Heart left ventricle (tissue), 16 donors: ENCODE measurements at regions of chr6 and their contacts with region 1.

Region 1: DNA sequence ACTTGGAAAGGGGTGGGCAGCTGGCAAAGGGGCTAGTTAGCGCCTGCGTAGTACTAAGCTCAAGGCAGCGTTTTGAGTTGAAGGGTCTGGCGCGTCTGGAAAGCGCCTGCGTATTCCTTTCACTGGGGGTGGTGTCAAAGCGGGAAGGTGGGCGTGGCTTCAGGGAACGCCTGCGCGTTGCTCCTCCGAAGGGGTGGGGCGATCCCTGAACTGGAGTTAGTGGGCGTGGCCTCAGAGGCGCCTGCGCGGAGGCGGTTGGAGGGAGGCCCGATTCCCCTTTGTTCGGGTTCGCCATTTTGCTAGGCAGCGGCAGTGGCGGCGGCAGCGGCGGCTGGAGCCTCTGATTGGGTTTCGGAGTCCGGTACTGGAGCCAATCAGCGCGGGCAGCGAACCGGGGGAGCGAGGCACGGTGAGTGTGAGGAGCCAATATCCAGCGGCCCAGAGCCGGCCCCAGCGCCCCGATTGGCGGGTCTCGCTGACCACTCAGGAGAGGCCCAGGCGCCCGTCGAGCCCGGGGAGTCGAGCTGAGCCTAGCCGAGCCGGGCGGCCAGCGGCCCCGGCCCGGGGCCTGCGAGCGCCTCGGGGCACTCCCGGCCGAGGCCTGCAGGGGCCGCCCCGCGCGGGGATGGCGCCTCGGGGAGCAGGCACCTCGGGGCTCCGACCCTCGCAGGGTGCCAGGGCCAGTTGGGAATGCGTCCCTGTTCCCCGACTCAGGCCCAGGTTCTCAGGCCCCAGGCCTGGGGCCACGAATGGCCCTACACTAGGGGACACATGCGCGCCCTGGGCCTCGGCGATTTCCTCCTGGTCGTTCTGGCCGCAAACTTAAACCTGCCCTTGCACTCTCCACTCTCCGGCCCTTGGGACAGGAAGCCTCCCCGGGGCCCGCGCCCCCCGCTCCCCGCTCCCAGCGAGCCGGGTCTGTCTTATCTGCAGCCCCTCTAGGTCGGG is at the start of gene NFYA:
- DNase-seq: peak; percentile 100
- ATAC-seq: peak; percentile 81 to 87 (median 83)
- H3K4me3 ChIP-seq: peak within 1 kb of the TSS; percentile 76 to 95 (median 90)
- H3K27ac ChIP-seq: peak within 1 kb of the TSS; percentile 93 to 100 (median 99)
- H3K4me1 ChIP-seq: peaks cover 0 to 48% (median 38%) of the 10 kb centered on the region in 12 donors
- H3K27me3 ChIP-seq: no peaks in the 10 kb centered on the region
- CTCF ChIP-seq: peak in 8 of 12 donors; percentile 3 to 54 (median 38)
- POLR2A ChIP-seq: peak; percentile 95 to 96
- total RNA-seq, gene NFYA: 6.5 to 12.5 (median 9.7) TPM

Region 2: GRCh38 chr6:40900791-40901190 is 172.2 kb before region 1 on chr6:
- intact Hi-C with region 1: loop called in 2 of 10 experiments (anchors 5 kb)
- DNase-seq: peak in 4 of 5 donors; percentile 52 to 63 (median 58)
- ATAC-seq: peak; percentile 90 to 93 (median 92)
- H3K4me3 ChIP-seq: no peak overlapping the region
- H3K27ac ChIP-seq: peak overlapping the region; percentile 78 to 97 (median 87)
- H3K4me1 ChIP-seq: peaks cover 0 to 53% (median 21%) of the 10 kb centered on the region in 12 donors
- H3K27me3 ChIP-seq: no peaks in the 10 kb centered on the region
- CTCF ChIP-seq: no peak
- POLR2A ChIP-seq: no peak

Region 3: GRCh38 chr6:41055149-41055548 is 17.8 kb before region 1 on chr6:
- intact Hi-C with region 1: loop called in 1 of 10 experiments (anchors 1 kb)
- DNase-seq: peak in 3 of 5 donors; percentile 52 to 58 (median 53)
- ATAC-seq: peak; percentile 65 to 77 (median 68)
- H3K4me3 ChIP-seq: peak overlapping the region in 11 of 12 donors; percentile 6 to 58 (median 52)
- H3K27ac ChIP-seq: peak overlapping the region; percentile 70 to 94 (median 87)
- H3K4me1 ChIP-seq: peaks cover 0 to 56% (median 21%) of the 10 kb centered on the region in 12 donors
- H3K27me3 ChIP-seq: no peaks in the 10 kb centered on the region
- CTCF ChIP-seq: no peak
- POLR2A ChIP-seq: peak in 1 of 2 donors; percentile 32

Region 4: DNA sequence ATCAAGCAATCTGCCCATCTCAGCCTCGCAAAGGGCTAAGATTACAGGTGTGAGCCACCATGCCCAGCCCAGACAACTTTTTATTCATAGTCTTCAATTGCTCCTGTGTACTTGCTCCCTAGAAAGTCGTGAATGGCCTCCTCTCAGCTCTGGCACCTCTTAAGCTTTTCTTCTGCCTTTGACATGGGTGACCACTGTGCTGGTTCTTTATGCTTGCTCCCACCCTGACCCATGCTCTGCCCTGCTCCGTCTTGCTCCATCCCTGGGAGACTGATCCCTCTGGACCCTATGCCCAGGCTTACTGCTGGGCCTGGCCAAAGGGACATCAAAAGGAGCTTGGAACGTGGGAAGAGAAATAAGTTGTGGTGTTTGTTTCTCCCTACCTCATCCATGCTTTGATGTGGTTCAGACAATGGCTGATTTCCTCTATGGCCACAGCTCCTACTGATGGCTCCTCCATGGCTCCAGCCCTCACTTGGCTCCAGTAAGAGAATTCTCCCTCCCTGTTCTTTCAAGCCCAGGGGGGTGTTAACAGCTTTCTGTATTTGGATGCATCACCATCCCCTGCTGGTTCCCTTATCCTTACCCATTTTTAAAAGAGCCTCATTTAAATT is 97.7 kb after region 1 on chr6:
- intact Hi-C with region 1: no loop called
- DNase-seq: no peak
- ATAC-seq: no peak
- H3K4me3 ChIP-seq: no peak overlapping the region
- H3K27ac ChIP-seq: no peak overlapping the region
- H3K4me1 ChIP-seq: no peaks in the 10 kb centered on the region
- H3K27me3 ChIP-seq: peaks cover 0 to 22% (median 0%) of the 10 kb centered on the region in 9 donors
- CTCF ChIP-seq: no peak
- POLR2A ChIP-seq: no peak

Region 5: GRCh38 chr6:41222513-41222912 is 149.6 kb after region 1 on chr6:
- intact Hi-C with region 1: no loop called
- DNase-seq: no peak
- ATAC-seq: no peak
- H3K4me3 ChIP-seq: no peak overlapping the region
- H3K27ac ChIP-seq: no peak overlapping the region
- H3K4me1 ChIP-seq: no peaks in the 10 kb centered on the region
- H3K27me3 ChIP-seq: peaks cover 0 to 19% (median 0%) of the 10 kb centered on the region in 9 donors
- CTCF ChIP-seq: no peak
- POLR2A ChIP-seq: no peak

Region 6: DNA sequence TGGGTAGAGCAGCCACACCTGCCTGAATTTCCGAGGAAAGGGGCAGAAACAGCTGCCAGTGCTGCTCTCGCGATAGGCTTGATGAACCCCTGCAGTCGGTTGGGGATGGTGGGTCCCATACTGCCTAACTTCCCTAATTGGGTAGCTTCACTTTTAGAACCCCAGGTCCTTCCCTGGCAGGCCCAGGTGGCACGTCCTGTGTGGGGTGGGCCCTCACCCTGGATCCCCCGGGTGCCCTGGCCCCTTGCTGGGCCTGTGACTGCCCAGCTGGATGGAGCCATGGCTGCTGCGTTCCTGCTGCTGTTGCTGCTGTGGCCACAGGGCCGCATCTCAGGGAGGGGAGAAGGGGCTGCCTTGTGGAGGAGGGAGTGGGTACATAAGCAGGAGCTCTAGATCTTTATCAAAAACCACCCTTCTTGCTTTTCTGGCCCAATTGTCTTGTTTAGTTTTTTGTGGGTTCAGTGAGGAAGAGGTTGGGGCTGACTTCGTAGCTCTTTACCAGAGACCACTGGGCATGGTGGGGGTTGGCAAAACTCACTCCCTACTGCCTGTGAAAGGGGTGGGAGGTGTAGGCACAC is 174.4 kb after region 1 on chr6:
- intact Hi-C with region 1: no loop called
- DNase-seq: no peak
- ATAC-seq: no peak
- H3K4me3 ChIP-seq: no peak overlapping the region
- H3K27ac ChIP-seq: no peak overlapping the region
- H3K4me1 ChIP-seq: no peaks in the 10 kb centered on the region
- H3K27me3 ChIP-seq: peaks cover 0 to 12% (median 0%) of the 10 kb centered on the region in 9 donors
- CTCF ChIP-seq: no peak
- POLR2A ChIP-seq: no peak